ENCODE measurements at regions of chr10 and their contacts with region 1.

Region 1: DNA sequence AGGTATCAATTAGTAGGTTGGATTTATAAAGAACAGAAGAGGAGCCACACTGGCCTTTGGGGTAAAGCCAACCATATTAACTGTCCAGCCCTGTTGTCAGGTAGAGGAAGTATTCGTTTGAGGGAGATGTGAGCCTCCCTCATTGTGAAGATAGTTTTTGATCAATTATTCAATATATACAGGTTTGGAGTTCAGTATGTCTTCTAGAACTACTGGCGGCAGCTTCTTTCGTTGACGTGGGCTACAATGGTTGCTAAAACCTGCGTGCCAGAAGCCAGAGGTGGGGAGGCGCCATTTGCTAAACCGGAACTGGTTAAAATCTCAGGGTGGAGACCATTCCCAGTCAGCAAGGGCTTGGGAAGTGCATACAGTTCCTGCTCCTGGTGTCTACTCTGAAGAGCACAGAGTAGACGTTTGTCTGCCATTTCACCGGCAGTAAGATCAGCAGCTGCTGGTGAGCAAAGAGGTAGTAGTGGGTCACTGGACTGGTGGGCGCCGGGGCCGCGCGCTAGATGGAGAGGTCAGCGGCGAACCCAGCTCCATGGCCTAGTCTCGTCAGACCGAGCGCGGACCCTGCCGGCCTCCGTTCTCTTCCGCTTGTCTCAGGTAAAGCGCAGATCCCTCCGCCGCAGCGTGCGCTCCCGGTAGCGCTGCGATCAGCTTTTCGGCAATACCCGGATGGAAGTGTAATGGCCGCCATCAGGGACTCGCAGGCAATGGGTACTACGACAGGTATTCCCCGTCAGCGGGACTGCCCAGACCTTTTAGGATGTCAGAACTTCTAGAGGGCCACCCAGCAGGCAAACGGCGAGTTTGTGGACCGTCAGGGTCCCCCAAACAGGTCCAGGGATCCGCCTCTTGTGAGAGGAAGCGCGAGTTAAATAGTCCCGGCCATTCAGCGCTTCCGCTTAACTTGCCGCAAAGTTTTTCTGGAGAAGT is at the start of gene ZNF518A:
- DNase-seq: peak; percentile 80 to 91 (median 87)
- H3K4me3 ChIP-seq: peak within 1 kb of the TSS; percentile 62 to 99 (median 82)
- H3K27ac ChIP-seq: peak within 1 kb of the TSS; percentile 78 to 99 (median 94)
- H3K27me3 ChIP-seq: peaks cover 0 to 47% (median 37%) of the 10 kb centered on the region in 45 donors
- CTCF ChIP-seq: peak in 19 of 56 donors; percentile 3 to 47 (median 20)
- total RNA-seq, gene ZNF518A: 23.2 to 58.5 (median 34.2) TPM

Region 2: DNA sequence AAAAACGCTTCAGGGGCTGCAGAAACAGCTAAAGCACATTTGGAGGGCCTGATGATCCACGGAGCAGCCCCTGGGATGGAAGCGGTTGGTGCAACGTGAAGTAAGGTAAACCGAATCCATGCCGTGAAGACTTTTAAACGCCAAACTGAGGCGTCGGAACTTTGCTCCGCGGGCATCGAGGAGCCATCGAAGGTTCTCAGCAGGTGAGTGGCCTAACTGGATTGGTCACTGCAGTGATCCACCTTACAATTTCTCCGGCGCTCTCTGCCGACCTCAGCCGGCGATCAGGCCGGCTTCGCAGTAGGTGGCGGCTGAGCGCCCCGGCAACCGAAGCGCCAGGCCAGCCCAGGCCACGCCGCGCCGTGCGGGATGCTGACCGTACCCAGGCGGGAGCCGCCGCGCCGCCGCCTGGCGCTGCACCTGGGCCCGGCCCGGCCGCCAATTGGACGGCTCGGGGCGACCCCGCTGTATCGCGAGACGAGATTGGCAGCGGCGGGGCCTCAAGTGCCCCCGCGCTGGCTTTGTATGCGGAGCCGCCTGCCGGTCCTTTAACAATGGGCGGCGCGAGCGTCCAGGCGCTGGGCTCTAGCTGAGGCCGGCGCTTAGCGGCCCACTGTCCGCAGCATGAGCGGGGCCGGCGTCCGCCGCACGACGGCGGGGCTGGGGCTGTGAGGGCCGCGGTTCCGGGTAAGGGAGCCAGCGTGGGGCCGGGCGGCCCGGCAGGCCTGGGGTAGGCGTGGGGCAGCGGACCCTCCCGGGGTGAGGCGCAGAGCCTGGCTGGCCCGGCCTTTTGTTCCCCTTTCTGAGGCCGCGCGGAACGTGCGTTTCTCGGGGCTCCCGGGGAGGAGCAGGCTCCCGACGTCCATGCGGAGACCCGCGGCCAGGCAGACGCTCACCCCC is 86.4 kb before region 1 on chr10 and contains the start of gene CCNJ:
- intact Hi-C with region 1: loop called in 1 of 2 experiments (anchors 2 kb)
- DNase-seq: peak; percentile 65 to 91 (median 83)
- H3K4me3 ChIP-seq: peak within 1 kb of the TSS; percentile 59 to 94 (median 85)
- H3K27ac ChIP-seq: peak within 1 kb of the TSS in 58 of 59 donors; percentile 2 to 92 (median 78)
- H3K27me3 ChIP-seq: no peaks in the 10 kb centered on the region
- CTCF ChIP-seq: peak in 49 of 56 donors; percentile 6 to 62 (median 40)
- total RNA-seq, gene CCNJ: 1.8 to 5.2 (median 3.5) TPM

Region 3: GRCh38 chr10:96089670-96090462 is 39.8 kb before region 1 on chr10:
- intact Hi-C with region 1: loop called (anchors 1 kb)
- DNase-seq: peak; percentile 86 to 94 (median 90)
- H3K4me3 ChIP-seq: peak overlapping the region; percentile 45 to 98 (median 83)
- H3K27ac ChIP-seq: peak overlapping the region in 58 of 59 donors; percentile 40 to 95 (median 86)
- H3K27me3 ChIP-seq: peaks cover 0 to 38% (median 24%) of the 10 kb centered on the region in 45 donors
- CTCF ChIP-seq: peak in 22 of 56 donors; percentile 5 to 39 (median 20)

Region 4: GRCh38 chr10:96306516-96306915 is 176.9 kb after region 1 on chr10:
- intact Hi-C with region 1: loop called in 1 of 2 experiments (anchors 10 kb)
- DNase-seq: peak; percentile 23 to 72 (median 58)
- H3K4me3 ChIP-seq: peak overlapping the region in 2 of 59 donors; percentile 7 to 9
- H3K27ac ChIP-seq: no peak overlapping the region
- H3K27me3 ChIP-seq: peaks cover 0 to 19% (median 4%) of the 10 kb centered on the region in 45 donors
- CTCF ChIP-seq: no peak

Measured in dorsolateral prefrontal cortex (tissue), 120 donors.